Common myeloid progenitor, CD34-positive (primary cell): ENCODE measurements at regions of chr7 and their contacts with region 1.

Region 1: GRCh38 chr7:2248984-2249694 is 7.1 kb downstream of the NUDT1 start:
- DNase-seq: peak; percentile 68 to 76 (median 68)
- H3K4me3 ChIP-seq: peak overlapping the region in 3 of 7 experiments; percentile 36 to 51 (median 36)
- H3K27ac ChIP-seq: peak overlapping the region in 1 of 2 experiments; percentile 25
- H3K4me1 ChIP-seq: peaks cover 5 to 82% (median 69%) of the 10 kb centered on the region in 4 experiments
- H3K27me3 ChIP-seq: no peaks in the 10 kb centered on the region

Region 2: DNA sequence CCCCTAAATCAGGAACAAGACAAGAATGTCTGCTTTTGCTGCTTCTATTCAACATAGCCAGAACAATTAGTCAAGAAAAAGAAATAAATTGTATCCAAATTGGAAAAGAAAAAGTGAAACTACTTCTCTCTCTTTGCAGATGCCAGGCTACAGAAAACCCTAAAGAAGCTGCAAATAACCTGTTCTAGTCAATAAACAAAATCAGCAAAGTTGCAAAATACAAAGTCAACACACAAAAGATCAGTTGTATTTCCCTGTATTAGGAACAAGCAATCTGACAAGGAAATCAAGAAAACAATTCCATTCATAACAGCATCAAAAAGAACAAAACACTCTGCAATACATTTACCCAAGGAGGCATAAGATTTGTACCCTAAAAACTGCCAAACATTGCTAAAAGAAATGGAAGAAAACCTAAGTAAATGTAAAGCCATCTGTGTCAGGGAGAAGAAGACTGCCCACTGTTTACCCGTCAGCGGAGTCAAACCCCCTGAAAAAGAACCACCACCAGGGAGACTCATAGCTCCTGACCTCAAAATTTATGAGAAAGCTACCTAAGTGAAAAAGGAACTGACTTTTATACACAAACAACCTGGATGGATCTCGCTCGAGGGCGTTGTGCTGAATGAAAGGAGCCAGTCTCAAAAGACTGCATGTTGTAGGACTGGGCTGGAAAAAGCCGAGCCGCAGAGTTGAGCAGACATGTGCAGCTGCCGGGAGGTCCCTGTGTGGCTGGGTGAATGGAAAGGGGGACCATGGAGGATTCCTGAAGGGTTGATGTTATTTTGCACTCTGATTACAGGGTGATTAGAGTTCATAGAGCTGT is 279.5 kb before region 1 on chr7:
- CTCF ChIA-PET with region 1: no interaction called
- POLR2A ChIA-PET with region 1: no interaction called
- DNase-seq: peak in 2 of 3 donors; percentile 49 to 64
- H3K4me3 ChIP-seq: peak overlapping the region in 1 of 7 experiments; percentile 23
- H3K27ac ChIP-seq: no peak overlapping the region
- H3K4me1 ChIP-seq: peaks cover 0 to 9% (median 2%) of the 10 kb centered on the region in 4 experiments
- H3K27me3 ChIP-seq: no peaks in the 10 kb centered on the region

Region 3: DNA sequence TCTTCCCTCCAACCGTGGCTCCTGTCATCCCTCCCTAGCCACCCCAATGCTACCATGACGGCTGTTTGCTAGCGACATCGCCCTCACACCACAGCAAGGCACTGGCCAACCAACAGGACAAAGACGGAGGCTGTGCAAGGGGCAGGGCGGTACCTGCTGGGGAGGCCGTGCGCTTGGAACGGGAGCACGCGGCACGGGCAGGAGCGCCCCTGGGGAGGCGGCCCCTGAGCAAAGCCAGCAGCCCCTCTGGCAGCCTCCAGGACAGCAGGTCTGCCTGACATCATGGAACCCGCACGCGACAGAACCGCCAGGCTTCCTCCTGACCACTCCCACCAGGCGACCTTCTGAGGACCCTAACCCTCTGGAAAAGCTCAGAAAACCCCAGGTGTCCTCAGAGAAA is 29.1 kb before region 1 on chr7:
- CTCF ChIA-PET with region 1: no interaction called
- POLR2A ChIA-PET with region 1: no interaction called
- DNase-seq: no peak
- H3K4me3 ChIP-seq: no peak overlapping the region
- H3K27ac ChIP-seq: no peak overlapping the region
- H3K4me1 ChIP-seq: no peaks in the 10 kb centered on the region
- H3K27me3 ChIP-seq: no peaks in the 10 kb centered on the region

Region 4: GRCh38 chr7:2237109-2237602 is 12.0 kb before region 1 on chr7:
- CTCF ChIA-PET with region 1: interaction called, 10 read pairs
- POLR2A ChIA-PET with region 1: no interaction called
- DNase-seq: peak in 2 of 3 donors; percentile 33 to 59
- H3K4me3 ChIP-seq: no peak overlapping the region
- H3K27ac ChIP-seq: no peak overlapping the region
- H3K4me1 ChIP-seq: peaks cover 4 to 20% (median 19%) of the 10 kb centered on the region in 4 experiments
- H3K27me3 ChIP-seq: no peaks in the 10 kb centered on the region

Region 5: DNA sequence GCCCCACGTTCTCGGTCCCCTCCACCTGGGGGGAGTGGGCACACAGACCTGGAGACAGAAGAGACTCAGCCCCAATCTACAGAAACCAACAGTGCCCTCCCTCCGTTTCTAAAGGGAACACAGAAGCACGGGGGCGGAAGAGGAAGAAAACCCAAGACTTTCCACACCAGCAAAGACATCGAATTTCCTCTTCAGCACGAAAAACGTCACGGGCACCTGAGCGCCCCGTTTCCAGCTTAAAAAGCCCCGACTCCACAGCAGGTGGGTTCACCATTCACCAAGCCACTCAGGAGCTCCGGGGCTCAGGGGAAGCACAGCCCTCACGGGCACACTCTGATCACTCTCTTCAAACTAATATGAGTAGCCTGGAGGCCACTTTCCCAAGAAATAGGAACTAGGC is 12.5 kb after region 1 on chr7:
- CTCF ChIA-PET with region 1: interaction called, 21 read pairs
- POLR2A ChIA-PET with region 1: no interaction called
- DNase-seq: peak; percentile 37 to 57 (median 48)
- H3K4me3 ChIP-seq: peak overlapping the region in 5 of 7 experiments; percentile 29 to 67 (median 54)
- H3K27ac ChIP-seq: peak overlapping the region in 1 of 2 experiments; percentile 34
- H3K4me1 ChIP-seq: peaks cover 0 to 9% (median 5%) of the 10 kb centered on the region in 4 experiments
- H3K27me3 ChIP-seq: no peaks in the 10 kb centered on the region

Region 6: GRCh38 chr7:2354186-2354938 is 105.2 kb after region 1 on chr7 and contains the start of gene EIF3B:
- CTCF ChIA-PET with region 1: interaction called, 14 read pairs
- POLR2A ChIA-PET with region 1: no interaction called
- DNase-seq: peak; percentile 95 to 97 (median 97)
- H3K4me3 ChIP-seq: peak within 1 kb of the TSS; percentile 84 to 97 (median 90)
- H3K27ac ChIP-seq: peak within 1 kb of the TSS; percentile 100
- H3K4me1 ChIP-seq: peaks cover 11 to 43% (median 32%) of the 10 kb centered on the region in 4 experiments
- H3K27me3 ChIP-seq: no peaks in the 10 kb centered on the region

Region 7: DNA sequence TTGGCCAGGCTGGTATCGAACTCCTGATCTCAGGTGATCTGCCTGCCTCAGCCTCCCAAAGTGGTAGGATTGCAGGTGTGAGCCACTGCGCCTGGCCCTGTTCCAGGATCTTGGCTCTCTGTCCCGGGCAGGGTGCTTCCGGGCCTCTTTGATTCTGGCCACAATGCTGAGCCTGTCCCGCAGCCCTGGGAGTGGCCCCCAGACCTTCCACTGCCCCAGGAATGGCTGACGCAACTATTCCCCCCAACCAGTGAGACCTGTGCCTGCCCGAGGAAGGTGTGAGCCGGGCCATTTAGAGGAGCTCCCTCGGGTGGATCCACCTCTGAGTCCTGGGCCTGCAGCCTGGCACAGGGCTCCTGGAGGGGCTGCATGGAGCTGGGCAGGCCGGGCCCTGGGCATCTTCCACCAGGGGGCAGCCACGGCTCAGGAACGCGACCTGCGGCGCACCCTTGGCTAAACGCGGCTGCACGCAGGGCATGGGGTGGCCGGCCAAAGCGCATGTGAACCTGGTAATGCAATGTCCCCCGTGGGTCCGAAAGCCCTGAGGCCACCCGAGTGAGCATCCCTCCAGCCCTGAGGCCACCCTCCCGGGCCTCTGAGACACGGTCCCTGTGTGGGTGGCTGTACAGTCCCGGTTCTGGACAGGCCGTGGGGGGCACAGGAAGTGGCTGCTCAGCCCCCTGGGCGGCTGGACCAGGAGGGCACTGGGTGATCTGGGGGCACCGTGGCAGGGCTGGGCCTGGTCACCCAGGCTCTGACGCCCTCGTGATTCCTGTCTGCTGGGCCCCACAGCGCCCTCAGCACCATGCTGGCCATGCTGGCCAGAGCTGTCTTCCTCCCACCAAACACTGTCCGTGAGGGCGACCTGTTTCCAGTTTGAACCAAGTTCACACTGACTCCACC is 202.3 kb after region 1 on chr7:
- CTCF ChIA-PET with region 1: no interaction called
- POLR2A ChIA-PET with region 1: no interaction called
- DNase-seq: peak; percentile 67 to 79 (median 77)
- H3K4me3 ChIP-seq: peak overlapping the region in 6 of 7 experiments; percentile 44 to 77 (median 60)
- H3K27ac ChIP-seq: peak overlapping the region in 1 of 2 experiments; percentile 14
- H3K4me1 ChIP-seq: peaks cover 0 to 15% (median 12%) of the 10 kb centered on the region in 4 experiments
- H3K27me3 ChIP-seq: no peaks in the 10 kb centered on the region